ENCODE measurements at regions of chr7 and their contacts with region 1.

Region 1: DNA sequence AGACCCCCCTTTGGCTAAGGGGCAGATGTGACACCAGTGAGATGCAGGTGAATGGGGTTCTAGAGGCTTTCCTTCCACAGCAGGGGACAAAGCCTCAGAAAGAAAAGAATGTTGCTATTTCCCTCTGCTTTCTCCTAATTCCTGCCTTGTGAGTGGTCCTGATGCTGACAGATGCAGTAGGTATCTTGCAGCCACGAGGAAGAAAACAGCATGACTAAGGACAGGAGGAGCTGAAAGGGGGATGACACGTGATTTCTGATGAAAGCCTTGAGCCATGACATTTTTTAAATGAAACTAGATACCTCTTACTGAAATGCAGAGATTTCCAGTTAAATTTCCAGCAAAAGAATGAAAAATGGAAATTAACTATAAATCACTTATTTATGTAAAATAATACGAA is 92.4 kb downstream of the C1GALT1 start:
- DNase-seq: peak; percentile 28
- H3K4me3 Mint-ChIP-seq: no peak overlapping the region
- H3K27ac Mint-ChIP-seq: no peak overlapping the region
- H3K4me1 Mint-ChIP-seq: peaks cover 15% of the 10 kb centered on the region
- H3K27me3 Mint-ChIP-seq: no peaks in the 10 kb centered on the region
- CTCF ChIP-seq: no peak

Region 2: GRCh38 chr7:6833636-6834035 is 441.1 kb before region 1 on chr7:
- CTCF ChIA-PET with region 1: no interaction called
- POLR2A ChIA-PET with region 1: no interaction called
- intact Hi-C with region 1: no loop called
- DNase-seq: no peak
- H3K4me3 Mint-ChIP-seq: no peak overlapping the region
- H3K27ac Mint-ChIP-seq: no peak overlapping the region
- H3K4me1 Mint-ChIP-seq: no peaks in the 10 kb centered on the region
- H3K27me3 Mint-ChIP-seq: peaks cover 17% of the 10 kb centered on the region
- CTCF ChIP-seq: no peak

Region 3: DNA sequence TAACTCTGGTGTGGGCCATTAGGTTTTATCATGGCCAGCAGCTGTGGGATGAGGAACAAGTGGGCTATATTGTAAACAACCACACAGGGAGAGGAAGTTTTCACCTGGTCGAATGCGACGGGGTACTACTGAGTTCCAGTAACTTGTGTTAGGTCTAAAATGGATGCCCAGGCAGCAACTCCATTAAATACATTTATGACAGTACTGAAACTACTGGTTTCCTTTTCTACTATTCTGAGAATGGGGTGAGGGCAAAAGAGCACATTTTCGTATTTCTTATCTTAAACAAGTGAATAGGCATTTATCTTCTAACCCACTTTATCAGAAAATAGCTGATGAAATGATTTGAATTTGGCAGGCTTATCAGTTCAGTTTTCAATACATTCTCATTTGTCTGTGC is 17.3 kb after region 1 on chr7:
- CTCF ChIA-PET with region 1: no interaction called
- POLR2A ChIA-PET with region 1: interaction called, 3 read pairs
- intact Hi-C with region 1: loop called (anchors 1 kb)
- DNase-seq: no peak
- H3K4me3 Mint-ChIP-seq: no peak overlapping the region
- H3K27ac Mint-ChIP-seq: no peak overlapping the region
- H3K4me1 Mint-ChIP-seq: no peaks in the 10 kb centered on the region
- H3K27me3 Mint-ChIP-seq: no peaks in the 10 kb centered on the region
- CTCF ChIP-seq: no peak

Region 4: GRCh38 chr7:7315851-7316250 is 41.1 kb after region 1 on chr7:
- CTCF ChIA-PET with region 1: no interaction called
- POLR2A ChIA-PET with region 1: no interaction called
- intact Hi-C with region 1: no loop called
- DNase-seq: no peak
- H3K4me3 Mint-ChIP-seq: no peak overlapping the region
- H3K27ac Mint-ChIP-seq: no peak overlapping the region
- H3K4me1 Mint-ChIP-seq: no peaks in the 10 kb centered on the region
- H3K27me3 Mint-ChIP-seq: no peaks in the 10 kb centered on the region
- CTCF ChIP-seq: no peak

Measured in MCF 10A (cell line).